ENCODE measurements at regions of chr9 and their contacts with region 1.

Region 1: GRCh38 chr9:91422758-91423711 is 597 bp downstream of the NFIL3 start:
- DNase-seq: peak; percentile 74
- H3K4me3 ChIP-seq: peak overlapping the region; percentile 64
- H3K27ac ChIP-seq: peak overlapping the region; percentile 91
- H3K4me1 ChIP-seq: peaks cover 6% of the 10 kb centered on the region
- H3K27me3 ChIP-seq: no peaks in the 10 kb centered on the region
- CTCF ChIP-seq: no peak

Region 2: DNA sequence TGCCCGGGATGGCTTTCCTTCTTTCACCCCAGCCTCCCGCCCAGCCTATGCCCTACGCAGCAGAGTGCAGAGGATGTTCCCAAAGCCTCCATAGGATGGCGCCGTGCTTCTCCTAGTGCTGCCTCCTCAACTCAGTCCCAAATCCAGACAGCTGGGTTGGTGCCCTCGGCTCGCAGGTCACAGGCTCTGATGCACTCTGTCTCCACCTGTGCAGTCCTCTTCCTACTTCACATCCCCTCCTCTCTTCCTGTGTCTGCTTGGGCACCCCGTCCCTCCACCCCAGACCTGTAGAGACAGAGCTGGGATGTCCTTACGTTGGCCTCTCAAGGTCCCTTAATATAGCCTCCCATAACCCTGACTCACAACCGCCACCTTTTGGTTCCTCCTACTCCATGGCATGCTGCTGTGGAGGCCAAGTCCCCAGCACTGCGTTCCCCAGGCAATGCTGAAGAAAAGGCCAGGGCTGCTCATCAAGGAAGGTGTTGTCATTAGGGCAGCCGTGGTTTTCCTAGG is 1503.8 kb before region 1 on chr9:
- intact Hi-C with region 1: no loop called
- DNase-seq: peak; percentile 67
- H3K4me3 ChIP-seq: no peak overlapping the region
- H3K27ac ChIP-seq: no peak overlapping the region
- H3K4me1 ChIP-seq: no peaks in the 10 kb centered on the region
- H3K27me3 ChIP-seq: no peaks in the 10 kb centered on the region
- CTCF ChIP-seq: no peak

Region 3: GRCh38 chr9:91085517-91086291 is 337.3 kb before region 1 on chr9:
- intact Hi-C with region 1: loop called (anchors 2 kb)
- DNase-seq: no peak
- H3K4me3 ChIP-seq: no peak overlapping the region
- H3K27ac ChIP-seq: no peak overlapping the region
- H3K4me1 ChIP-seq: no peaks in the 10 kb centered on the region
- H3K27me3 ChIP-seq: no peaks in the 10 kb centered on the region
- CTCF ChIP-seq: no peak

Region 4: DNA sequence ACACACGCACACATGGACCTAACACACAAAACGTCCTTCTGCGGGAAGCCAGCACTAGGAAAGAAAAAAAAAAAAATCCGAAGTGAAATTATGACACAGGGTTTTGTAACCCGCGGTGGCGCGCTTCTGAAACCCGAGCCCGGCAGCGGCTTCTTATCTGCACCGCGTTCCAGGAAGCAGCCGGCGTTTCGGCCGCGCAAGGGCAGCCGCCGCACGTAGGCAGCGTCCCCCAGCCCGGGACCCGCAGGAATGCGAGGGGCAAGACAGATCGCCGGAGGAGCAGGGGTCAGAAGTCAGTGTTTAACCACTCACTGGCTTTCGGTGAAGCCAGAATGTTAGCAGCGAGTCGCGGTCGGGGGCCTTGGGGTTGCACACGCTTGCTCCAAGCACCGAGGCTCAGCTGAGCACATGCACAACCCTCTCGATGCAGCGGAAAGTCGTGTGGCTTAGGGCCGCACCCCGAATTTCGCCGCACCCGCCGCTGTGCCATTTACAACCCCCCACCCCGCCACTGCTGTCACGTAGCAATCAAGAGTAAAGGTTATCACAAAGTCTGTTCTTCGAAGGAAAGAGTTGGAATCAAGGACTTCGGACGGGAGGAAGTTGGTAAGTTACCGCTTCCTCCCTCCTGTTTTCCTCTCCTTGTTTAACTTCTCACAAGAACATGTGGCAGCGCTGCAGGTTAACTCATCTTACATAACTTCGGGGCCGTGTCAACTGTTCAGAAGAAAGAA is 229.2 kb before region 1 on chr9:
- intact Hi-C with region 1: loop called (anchors 5 kb)
- DNase-seq: peak; percentile 88
- H3K4me3 ChIP-seq: peak overlapping the region; percentile 39
- H3K27ac ChIP-seq: peak overlapping the region; percentile 98
- H3K4me1 ChIP-seq: peaks cover 6% of the 10 kb centered on the region
- H3K27me3 ChIP-seq: no peaks in the 10 kb centered on the region
- CTCF ChIP-seq: no peak

Region 5: DNA sequence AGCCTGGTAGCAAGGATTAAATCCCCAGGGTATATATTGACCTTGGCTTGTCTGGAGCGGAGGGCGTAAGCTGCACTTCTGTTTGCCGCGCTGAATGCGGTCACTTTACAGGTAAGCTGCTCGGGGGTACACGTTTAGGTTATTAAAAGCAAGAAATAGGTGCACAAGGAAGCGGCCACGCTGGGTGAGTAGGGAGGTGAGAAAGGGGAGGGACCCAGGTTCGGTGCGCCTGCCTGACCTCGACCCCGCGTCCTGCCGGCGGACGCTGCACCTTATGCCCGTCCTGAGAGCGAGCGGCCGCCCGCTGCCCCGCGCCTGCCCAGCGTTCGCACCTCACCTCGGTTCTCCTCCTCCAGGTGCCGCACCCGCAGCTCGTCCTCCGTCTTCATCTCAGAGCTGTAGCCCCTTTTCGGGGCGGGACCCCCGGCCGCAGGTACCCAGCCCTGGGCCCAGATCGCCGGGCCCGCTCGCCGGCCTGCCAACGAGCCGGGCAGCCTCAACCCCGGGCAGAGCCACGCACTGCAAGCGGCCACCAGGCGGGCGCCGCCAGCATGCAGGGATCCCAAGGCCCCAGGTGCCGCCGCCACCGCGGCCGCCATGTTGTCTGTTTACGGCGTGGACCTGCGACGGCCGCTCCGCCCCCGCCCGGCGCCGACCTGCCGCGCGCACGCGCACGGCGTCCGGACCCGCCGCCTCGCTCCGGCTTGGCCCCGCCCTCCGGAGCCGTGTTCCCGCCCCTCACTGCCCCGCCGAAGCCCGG is 61.6 kb before region 1 on chr9 and contains the start of gene AUH:
- intact Hi-C with region 1: loop called (anchors 5 kb)
- DNase-seq: peak; percentile 88
- H3K4me3 ChIP-seq: peak within 1 kb of the TSS; percentile 95
- H3K27ac ChIP-seq: peak within 1 kb of the TSS; percentile 85
- H3K4me1 ChIP-seq: no peaks in the 10 kb centered on the region
- H3K27me3 ChIP-seq: no peaks in the 10 kb centered on the region
- CTCF ChIP-seq: no peak
- total RNA-seq, gene AUH: 21.5 to 47.6 TPM

Measured in colonic mucosa (tissue), 4 donors.